Activated naive CD4-positive, alpha-beta T cell treated with anti-CD3 and anti-CD28 coated beads for 36 hours (primary cell): ENCODE measurements at regions of chr6 and their contacts with region 1.

Region 1: DNA sequence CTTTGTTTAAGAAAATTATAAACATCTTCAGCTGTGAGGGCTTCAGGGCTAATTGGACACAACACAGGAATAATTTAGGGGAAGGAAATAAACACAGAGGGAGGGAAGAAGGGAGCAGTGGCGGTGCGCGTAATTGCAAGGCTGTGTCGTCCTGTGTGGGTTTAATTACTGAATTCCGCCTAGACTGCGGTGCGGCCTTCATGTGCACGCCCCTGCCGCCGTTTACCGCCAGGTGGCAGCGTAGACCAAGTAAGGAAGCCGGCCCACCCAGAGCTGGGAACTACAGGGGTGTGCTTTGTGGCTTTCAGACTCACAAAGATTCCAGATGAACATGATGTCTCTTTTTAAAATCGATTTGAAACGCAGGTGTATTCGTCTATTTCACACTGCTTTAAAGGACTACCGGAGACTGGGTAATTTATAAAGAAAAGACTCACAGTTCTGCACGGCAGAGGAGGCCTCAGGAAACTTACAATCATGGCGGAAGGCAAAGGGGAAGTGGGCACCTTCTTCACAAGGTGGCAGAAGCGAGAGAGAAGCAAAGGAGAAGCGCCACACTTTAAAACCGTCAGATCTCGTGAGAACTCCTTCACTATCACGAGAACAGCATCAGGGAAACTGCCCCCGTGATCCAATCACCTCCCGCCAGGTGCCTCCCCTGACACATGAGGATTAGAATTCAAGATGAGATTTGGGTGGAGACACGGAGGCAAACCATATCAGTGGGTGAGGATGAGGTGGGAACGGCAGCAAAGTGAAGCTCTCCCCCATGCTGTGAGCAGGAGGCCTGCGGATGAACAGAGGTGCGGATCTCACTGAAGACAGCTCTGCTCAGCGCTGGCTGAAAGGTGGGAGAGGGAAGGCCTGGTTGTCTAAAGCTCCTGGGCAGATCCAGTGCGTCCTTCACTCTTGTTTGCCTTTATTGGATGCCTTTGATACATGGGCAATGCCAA is 222.0 kb upstream of the PDE10A start:
- DNase-seq: peak; percentile 77
- H3K4me3 Mint-ChIP-seq: no peak overlapping the region
- H3K27ac Mint-ChIP-seq: no peak overlapping the region
- H3K4me1 Mint-ChIP-seq: peaks cover 4% of the 10 kb centered on the region
- H3K27me3 Mint-ChIP-seq: peaks cover 9% of the 10 kb centered on the region

Region 2: DNA sequence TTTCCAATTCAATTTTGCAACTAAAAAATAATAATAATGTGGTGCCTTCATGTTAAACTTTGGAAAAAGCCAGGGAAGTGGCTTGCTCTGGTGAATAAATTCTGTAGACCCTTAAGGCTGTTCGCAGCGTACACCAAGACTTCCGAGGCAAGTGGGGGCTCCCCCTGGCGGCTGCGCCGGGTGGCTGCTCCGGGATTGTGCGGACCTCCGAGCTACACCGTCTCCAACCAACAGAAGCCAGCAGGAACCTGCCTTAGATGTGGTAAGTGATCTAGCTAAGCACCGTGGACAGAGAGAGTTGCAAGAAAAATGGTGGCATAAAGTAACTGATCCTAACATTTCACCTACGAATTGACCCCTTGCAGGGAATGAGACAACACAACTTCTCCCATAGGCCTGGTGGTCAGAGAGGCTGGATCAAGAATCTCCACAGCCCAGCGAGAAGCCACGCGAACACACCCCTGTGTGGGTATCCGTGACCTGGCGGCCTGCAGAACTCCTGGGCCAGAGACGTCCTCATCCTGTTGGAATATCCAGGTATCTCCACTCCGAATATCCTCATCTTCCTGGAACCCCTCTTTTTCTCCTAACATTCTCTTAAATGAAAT is 212.9 kb after region 1 on chr6:
- CTCF ChIA-PET with region 1: interaction called, 18 read pairs
- intact Hi-C with region 1: loop called (anchors 1 kb)
- DNase-seq: peak; percentile 65
- H3K4me3 Mint-ChIP-seq: no peak overlapping the region
- H3K27ac Mint-ChIP-seq: no peak overlapping the region
- H3K4me1 Mint-ChIP-seq: no peaks in the 10 kb centered on the region
- H3K27me3 Mint-ChIP-seq: peaks cover 31% of the 10 kb centered on the region

Region 3: GRCh38 chr6:166275714-166276166 is 390.7 kb after region 1 on chr6:
- CTCF ChIA-PET with region 1: no interaction called
- intact Hi-C with region 1: loop called (anchors 5 kb)
- DNase-seq: peak; percentile 78
- H3K4me3 Mint-ChIP-seq: no peak overlapping the region
- H3K27ac Mint-ChIP-seq: no peak overlapping the region
- H3K4me1 Mint-ChIP-seq: peaks cover 3% of the 10 kb centered on the region
- H3K27me3 Mint-ChIP-seq: no peaks in the 10 kb centered on the region